ENCODE measurements at regions of chr18 and their contacts with region 1.

Region 1: DNA sequence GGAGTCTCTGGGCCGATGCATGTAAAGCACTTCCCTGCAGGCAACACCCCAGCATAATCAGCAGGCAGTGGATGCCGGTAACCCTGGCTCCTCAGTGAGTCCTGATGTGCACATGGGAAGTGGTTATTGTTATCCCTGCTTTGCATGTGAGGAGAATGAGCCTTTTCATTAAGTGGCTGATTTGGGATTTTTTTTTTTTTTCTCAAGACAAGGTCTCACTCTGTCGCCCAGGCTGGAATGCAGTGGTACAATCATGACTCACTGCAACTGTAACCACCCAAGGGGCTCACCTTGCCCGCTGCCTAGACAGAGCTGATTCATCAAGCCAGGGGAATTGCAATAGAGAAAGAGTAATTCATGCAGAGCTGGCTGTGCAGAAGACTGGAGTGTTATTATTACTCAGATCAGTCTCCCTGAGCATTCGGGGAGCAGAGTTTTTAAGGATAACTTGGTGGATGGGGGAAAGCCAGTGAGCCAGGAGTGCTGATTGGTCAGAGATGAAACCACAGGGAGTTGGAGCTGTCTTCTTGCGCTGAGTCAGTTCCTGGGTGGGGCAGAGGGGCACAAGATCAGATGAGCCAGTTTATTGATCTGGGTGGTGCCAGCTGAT is 95.4 kb downstream of the SOCS6 start:
- DNase-seq: peak; percentile 72
- ATAC-seq: no peak
- H3K4me3 ChIP-seq: no peak overlapping the region
- H3K27ac ChIP-seq: peak overlapping the region; percentile 6
- H3K4me1 ChIP-seq: peaks cover 79% of the 10 kb centered on the region
- H3K27me3 ChIP-seq: no peaks in the 10 kb centered on the region
- CTCF ChIP-seq: no peak
- EP300 ChIP-seq: no peak
- POLR2A ChIP-seq: no peak
- RAD21 ChIP-seq: no peak

Region 2: DNA sequence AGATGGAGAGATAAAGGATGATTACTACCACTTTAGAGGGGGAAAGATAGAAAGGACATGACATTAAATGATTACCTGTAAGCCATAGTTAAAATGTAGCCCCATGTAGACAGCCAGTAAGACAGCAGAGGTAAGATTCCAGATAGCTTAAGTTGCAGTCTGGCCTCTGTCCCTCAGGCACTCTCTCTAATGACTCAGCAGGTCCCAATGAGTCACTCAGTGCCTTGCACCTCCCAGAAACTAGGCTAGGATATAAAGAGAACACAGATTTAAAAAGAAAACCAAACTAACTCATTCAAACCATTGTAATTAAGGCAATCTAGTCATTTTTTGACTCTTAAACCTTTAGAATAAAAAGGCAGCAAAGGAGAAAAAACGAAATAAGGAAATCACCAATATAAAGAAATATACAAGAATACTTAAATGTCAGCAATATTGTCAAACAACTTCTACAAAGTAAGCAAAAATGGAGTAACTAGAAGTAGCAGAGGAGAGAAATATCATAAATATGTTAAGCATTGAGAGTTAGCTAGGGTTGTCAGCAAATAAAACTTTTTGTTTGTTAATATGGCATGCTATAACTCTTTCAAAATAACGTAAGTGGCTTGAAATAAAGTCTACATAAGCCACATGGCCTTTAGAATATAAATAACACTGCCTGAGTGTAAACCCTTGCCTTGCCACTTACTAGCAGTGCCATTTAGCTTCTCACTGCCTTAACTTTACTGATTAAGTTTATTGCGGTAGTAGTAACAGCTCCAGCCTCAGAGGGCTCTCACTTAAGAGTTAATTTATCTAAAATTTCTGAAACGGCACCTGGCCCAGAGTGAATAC is 46.9 kb before region 1 on chr18:
- CTCF ChIA-PET with region 1: no interaction called
- POLR2A ChIA-PET with region 1: interaction called, 27 read pairs
- in situ Hi-C with region 1: loop called (anchors 5 kb)
- intact Hi-C with region 1: loop called (anchors 1 kb)
- DNase-seq: peak; percentile 81
- ATAC-seq: peak; percentile 41
- H3K4me3 ChIP-seq: peak overlapping the region in 2 of 3 experiments; percentile 20 to 59; a peak in 3 of 6 replicates
- H3K27ac ChIP-seq: peak overlapping the region; percentile 97
- H3K4me1 ChIP-seq: peaks cover 76% of the 10 kb centered on the region
- H3K27me3 ChIP-seq: no peaks in the 10 kb centered on the region
- CTCF ChIP-seq: no peak
- EP300 ChIP-seq: peak in 1 of 2 experiments; percentile 52; a peak in 1 of 4 replicates
- POLR2A ChIP-seq: peak in 1 of 2 experiments; percentile 27; a peak in 1 of 4 replicates
- RAD21 ChIP-seq: no peak

Region 3: DNA sequence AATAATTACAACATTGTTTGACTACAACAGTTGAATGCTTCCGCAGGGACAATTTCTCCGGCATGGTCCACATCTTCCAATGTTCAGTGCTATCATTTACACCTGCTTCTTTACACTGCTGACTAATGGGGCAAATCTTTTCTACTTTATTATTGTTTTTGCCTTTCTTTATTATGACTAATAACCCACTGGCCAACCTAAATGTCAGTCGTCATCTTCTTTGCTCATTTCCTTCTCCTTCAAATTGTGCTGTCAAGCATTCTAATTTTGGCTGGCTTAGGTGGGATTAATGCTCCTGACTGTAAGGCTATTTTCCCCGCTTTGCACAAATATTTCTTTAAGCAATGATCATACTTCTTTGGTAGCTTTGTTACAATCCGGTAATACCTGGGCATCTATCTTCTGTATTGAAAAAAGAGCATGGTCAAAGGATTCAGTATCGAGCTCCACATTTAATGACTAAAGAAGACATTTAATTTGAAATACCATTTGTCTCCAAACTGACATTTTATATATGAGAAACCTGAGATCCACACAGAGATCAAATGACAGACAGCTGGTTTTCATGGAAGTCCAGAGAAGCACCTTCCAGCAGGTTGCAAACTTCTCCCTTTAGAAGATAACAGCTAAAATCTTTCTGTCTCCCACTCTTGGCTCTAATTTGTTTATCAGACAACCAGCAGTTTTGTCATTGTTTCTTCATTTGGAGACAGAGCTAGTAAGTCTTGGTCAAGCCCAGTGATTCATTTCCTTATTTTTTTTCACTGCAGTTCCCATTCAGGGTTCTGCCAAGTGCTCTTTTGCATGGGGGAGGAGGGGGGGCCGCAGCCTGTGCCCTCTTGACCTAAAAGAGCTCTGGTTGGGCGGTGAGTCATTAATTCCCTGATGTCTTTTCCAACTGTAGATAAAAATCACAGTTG is 37.4 kb after region 1 on chr18:
- CTCF ChIA-PET with region 1: no interaction called
- POLR2A ChIA-PET with region 1: interaction called, 13 read pairs
- in situ Hi-C with region 1: no loop called
- intact Hi-C with region 1: loop called (anchors 5 kb)
- DNase-seq: peak; percentile 35
- ATAC-seq: no peak
- H3K4me3 ChIP-seq: no peak overlapping the region
- H3K27ac ChIP-seq: no peak overlapping the region
- H3K4me1 ChIP-seq: peaks cover 54% of the 10 kb centered on the region
- H3K27me3 ChIP-seq: no peaks in the 10 kb centered on the region
- CTCF ChIP-seq: no peak
- EP300 ChIP-seq: peak in 1 of 2 experiments; percentile 36; a peak in 1 of 4 replicates
- POLR2A ChIP-seq: no peak
- RAD21 ChIP-seq: no peak

Region 4: DNA sequence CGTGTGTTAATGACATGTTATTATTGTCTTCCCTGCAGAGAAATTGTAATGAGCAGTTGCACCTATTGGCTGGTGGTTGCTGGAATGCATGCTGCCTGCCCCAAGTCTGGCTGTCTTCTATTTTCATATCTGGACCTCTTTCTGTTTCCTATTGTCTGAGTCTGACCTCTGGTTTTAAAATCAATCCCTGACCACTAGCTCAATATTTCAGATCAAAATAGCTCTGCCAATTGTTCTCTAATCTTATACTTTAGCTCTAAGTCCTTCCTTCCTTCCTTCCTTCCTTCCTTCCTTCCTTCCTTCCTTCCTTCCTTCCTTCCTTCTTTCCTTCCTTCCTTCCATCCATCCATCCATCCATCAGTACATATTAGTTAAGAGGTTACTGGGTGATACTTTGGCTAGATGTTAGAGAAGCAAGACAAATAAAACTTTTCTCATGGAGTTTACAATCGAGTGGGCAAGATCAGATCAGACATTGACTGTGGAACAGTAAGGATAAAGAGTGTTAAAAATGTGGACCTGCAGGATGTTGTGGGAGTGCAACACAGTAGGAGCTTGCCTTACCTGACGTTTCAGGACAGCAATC is 321.6 kb after region 1 on chr18:
- CTCF ChIA-PET with region 1: no interaction called
- POLR2A ChIA-PET with region 1: no interaction called
- in situ Hi-C with region 1: no loop called
- intact Hi-C with region 1: no loop called
- DNase-seq: no peak
- ATAC-seq: no peak
- H3K4me3 ChIP-seq: no peak overlapping the region
- H3K27ac ChIP-seq: no peak overlapping the region
- H3K4me1 ChIP-seq: no peaks in the 10 kb centered on the region
- H3K27me3 ChIP-seq: no peaks in the 10 kb centered on the region
- CTCF ChIP-seq: no peak
- EP300 ChIP-seq: no peak
- POLR2A ChIP-seq: no peak
- RAD21 ChIP-seq: no peak

Measured in HepG2 (cell line).